ENCODE measurements at regions of chr3 and their contacts with region 1.

Region 1: DNA sequence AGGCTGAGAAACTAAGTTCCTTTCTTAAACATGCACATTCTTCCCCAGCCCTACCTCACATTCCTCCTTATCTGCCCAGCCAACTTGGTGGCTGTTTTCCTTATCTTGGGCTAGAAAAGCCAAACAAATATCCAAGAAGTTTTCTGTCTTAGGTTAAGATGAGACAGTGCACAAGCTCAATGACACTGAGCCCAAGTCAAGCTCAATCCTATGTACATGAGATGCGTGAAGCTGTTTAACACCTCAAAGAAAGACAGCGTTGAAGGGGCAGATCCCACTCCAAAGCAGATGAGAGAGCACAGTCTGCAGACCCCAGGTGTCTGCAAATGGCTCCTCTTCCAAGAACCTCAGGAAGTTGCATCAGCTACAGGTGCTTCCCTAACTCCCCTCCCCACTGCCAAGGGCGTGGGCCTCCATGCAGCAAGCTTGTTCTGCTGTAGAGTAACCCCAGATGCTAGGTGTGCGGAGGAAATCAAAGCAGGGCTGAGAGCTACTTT is 16.6 kb downstream of the LRRC2 start:
- DNase-seq: peak; percentile 38
- ATAC-seq: no peak
- H3K4me3 Mint-ChIP-seq: no peak overlapping the region
- H3K27ac Mint-ChIP-seq: no peak overlapping the region
- H3K4me1 Mint-ChIP-seq: peaks cover 30% of the 10 kb centered on the region
- H3K27me3 Mint-ChIP-seq: peaks cover 14% of the 10 kb centered on the region

Region 2: DNA sequence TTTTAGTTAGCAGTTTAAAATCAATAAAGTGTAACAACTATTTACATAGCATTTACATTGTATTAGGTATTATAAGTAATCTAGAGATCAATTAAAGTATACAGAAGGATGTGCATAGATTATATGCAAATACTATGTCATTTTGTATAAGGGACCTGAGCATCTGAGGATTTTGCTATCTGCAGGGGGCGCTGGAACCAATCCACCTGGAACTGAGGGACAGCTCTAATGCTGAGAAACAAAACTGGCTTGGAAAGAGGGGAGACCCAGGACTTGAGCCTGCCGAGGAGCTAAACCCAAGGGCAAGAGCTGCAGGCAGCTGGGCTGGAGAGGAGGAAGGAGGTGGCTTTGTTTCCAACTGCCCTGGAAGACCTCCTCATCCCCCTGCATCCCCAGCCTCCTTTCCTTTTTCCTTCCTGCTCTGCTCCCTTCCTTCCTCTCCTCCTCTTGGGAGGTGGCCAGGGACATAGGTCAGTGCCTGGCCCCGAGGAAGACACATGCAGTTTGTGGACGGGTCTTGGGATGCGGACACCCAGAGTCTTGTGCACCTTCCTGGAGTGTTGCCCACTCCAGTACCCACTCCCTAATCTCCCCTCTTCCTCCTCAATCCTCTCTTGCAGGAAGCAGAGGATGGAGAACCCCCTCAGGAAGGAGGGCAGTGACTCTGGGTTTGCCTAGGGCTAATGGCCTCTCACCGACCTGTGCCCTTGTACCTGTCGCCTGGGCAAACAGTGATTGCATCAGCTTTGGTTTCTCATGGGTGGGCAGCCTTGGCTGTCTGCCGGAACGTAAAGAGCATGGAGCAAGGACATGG is 52.5 kb before region 1 on chr3:
- CTCF ChIA-PET with region 1: interaction called, 10 read pairs
- DNase-seq: peak; percentile 70
- ATAC-seq: peak; percentile 57
- H3K4me3 Mint-ChIP-seq: no peak overlapping the region
- H3K27ac Mint-ChIP-seq: no peak overlapping the region
- H3K4me1 Mint-ChIP-seq: peaks cover 4% of the 10 kb centered on the region
- H3K27me3 Mint-ChIP-seq: peaks cover 6% of the 10 kb centered on the region

Region 3: DNA sequence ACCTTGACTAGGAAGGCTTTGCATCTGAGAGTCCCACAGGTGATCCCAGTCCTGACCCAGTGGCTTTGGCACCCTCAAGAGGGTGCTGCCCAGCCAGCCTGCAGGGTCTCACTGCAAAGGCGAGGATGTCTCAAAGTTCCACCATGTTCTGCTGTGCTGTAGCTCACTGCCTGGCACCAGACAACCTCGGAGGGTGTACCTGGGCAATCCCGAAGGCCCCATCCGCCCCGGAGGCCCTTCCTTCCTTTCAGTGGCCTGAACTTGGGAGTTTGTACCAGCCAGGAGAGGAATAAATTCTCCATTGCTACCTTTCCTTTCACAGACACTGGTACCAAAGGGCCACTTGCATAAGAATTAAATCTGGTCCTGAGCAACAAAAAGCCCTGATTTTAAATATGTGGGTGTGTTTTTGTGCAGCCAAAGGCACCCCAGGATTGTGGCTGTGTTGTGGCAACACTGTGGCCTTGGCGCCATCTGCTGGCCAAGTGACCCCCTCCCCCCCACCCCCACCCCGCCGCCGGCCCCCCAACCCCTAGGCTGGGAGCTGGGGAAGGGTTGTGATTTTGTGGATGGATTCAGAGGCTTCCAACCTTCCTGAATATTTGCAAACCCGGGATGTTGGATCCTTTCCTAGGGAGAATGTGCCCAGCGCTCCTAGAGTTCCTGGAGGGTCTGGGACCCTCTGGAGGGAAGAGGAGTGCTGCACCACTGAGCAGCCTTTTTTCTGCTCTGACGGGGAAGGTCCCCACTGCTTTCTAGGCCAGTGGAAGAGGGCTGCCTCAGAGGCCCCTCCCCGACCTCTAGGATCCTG is 821.6 kb after region 1 on chr3:
- CTCF ChIA-PET with region 1: no interaction called
- DNase-seq: peak; percentile 58
- ATAC-seq: peak; percentile 27
- H3K4me3 Mint-ChIP-seq: no peak overlapping the region
- H3K27ac Mint-ChIP-seq: no peak overlapping the region
- H3K4me1 Mint-ChIP-seq: no peaks in the 10 kb centered on the region
- H3K27me3 Mint-ChIP-seq: peaks cover 4% of the 10 kb centered on the region